ENCODE measurements at regions of chr2 and their contacts with region 1.

Region 1: DNA sequence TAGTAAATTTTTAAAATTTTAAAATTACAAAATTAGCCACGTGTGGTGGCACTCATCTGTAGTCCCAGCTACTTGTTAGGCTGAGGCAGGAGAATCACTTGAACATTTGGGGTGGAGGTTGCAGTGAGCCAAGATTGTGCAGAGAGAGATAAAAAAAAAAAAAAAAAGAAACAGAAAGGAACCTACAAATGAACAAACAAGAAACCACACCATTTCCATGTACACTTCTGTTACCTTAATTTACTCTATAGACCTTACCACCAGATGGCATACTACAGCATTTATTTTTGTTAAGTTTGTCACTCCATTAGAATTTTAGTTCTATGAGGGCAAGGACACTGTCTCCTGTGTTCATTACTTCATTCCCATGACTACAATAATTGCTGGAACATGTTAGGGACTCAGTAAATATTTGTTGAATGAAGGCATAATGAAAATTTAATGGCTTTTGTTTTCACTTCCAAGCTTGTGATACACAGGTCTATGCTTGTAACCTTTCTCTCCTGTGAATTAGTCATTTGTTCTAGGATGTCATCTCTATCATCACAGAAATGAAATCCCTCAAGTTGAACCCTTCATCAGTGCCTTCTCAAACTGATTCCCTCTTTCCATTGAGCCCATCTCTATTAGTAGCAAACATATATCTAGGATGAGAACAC is 76.0 kb downstream of the ARHGAP15 start:
- DNase-seq: no peak
- H3K4me3 Mint-ChIP-seq: no peak overlapping the region
- H3K27ac Mint-ChIP-seq: peak overlapping the region; percentile 78
- H3K4me1 Mint-ChIP-seq: peaks cover 53% of the 10 kb centered on the region
- H3K27me3 Mint-ChIP-seq: no peaks in the 10 kb centered on the region

Region 2: GRCh38 chr2:143177096-143177786 is 28.0 kb before region 1 on chr2:
- CTCF ChIA-PET with region 1: no interaction called
- intact Hi-C with region 1: loop called (anchors 2 kb)
- DNase-seq: no peak
- H3K4me3 Mint-ChIP-seq: peak overlapping the region; percentile 55
- H3K27ac Mint-ChIP-seq: peak overlapping the region; percentile 67
- H3K4me1 Mint-ChIP-seq: peaks cover 52% of the 10 kb centered on the region
- H3K27me3 Mint-ChIP-seq: no peaks in the 10 kb centered on the region

Region 3: DNA sequence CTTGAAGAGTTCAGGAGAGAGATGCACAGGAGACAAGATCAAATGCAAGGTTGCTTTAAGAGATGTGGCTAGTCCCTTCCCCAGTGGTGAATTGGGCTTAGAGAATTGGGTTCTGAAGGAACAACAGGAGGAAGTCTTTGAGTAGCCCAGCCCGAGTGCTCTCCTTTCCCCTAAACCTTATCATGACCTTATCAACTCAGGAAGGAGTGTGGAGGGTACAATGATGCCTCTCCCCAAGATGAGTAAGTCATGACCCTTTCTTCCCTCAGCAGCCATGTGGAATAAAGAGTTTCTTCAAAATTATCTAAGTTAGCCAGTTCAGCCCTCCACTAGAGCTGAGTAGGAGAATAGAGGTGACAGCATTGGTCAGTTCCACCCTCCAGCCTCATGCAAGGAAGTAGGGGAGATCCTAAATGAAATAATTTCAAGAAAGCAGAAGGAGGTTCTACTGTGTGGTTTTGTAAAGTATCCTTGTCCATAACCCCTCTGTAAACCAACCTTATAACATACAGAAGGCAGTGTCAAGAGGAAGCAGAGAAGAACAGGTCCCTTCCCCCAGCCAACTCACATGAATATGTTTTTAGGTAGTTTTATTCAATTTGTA is 12.4 kb after region 1 on chr2:
- CTCF ChIA-PET with region 1: interaction called, 28 read pairs
- intact Hi-C with region 1: loop called (anchors 1 kb)
- DNase-seq: no peak
- H3K4me3 Mint-ChIP-seq: no peak overlapping the region
- H3K27ac Mint-ChIP-seq: peak overlapping the region; percentile 48
- H3K4me1 Mint-ChIP-seq: peaks cover 32% of the 10 kb centered on the region
- H3K27me3 Mint-ChIP-seq: no peaks in the 10 kb centered on the region

Region 4: DNA sequence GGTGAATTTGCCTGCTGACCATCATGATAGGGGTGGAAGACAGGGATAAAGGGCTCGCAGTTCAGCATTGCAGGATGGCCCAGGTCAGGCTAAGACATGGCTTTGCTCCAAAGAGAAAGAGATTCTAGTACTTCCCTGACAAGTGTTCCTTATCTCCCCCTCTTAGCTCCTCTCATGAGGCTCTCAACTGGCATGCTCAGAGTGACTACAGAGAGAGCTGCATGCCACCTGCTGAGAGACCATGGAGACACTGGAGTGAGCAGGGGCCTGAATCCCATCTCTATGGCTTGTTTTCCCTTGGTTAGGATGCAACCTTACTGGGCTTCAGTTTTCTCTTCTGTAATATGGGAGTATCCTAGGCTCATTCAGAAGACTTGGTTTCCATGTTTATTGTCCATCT is 18.3 kb after region 1 on chr2:
- CTCF ChIA-PET with region 1: interaction called, 28 read pairs
- intact Hi-C with region 1: loop called (anchors 1 kb)
- DNase-seq: no peak
- H3K4me3 Mint-ChIP-seq: no peak overlapping the region
- H3K27ac Mint-ChIP-seq: no peak overlapping the region
- H3K4me1 Mint-ChIP-seq: peaks cover 54% of the 10 kb centered on the region
- H3K27me3 Mint-ChIP-seq: no peaks in the 10 kb centered on the region

Region 5: GRCh38 chr2:143451642-143452281 is 246.5 kb after region 1 on chr2:
- CTCF ChIA-PET with region 1: no interaction called
- intact Hi-C with region 1: no loop called
- DNase-seq: peak; percentile 9
- H3K4me3 Mint-ChIP-seq: no peak overlapping the region
- H3K27ac Mint-ChIP-seq: no peak overlapping the region
- H3K4me1 Mint-ChIP-seq: peaks cover 42% of the 10 kb centered on the region
- H3K27me3 Mint-ChIP-seq: no peaks in the 10 kb centered on the region

Measured in activated naive CD4-positive, alpha-beta T cell treated with anti-CD3 and anti-CD28 coated beads for 36 hours (primary cell).